Activated naive CD4-positive, alpha-beta T cell treated with anti-CD3 and anti-CD28 coated beads, Interleukin-2, amount 10 ng/mL, durations not matched to agents 7 days and 5 days (primary cell): ENCODE measurements at regions of chr22 and their contacts with region 1.

Region 1: GRCh38 chr22:32528984-32529982 is 54.7 kb downstream of the FBXO7 start:
- DNase-seq: peak; percentile 78
- H3K4me3 Mint-ChIP-seq: no peak overlapping the region
- H3K27ac Mint-ChIP-seq: no peak overlapping the region
- H3K4me1 Mint-ChIP-seq: no peaks in the 10 kb centered on the region
- H3K27me3 Mint-ChIP-seq: peaks cover 11% of the 10 kb centered on the region

Region 2: GRCh38 chr22:32307617-32308016 is 221.7 kb before region 1 on chr22:
- CTCF ChIA-PET with region 1: no interaction called
- DNase-seq: no peak
- H3K4me3 Mint-ChIP-seq: no peak overlapping the region
- H3K27ac Mint-ChIP-seq: no peak overlapping the region
- H3K4me1 Mint-ChIP-seq: no peaks in the 10 kb centered on the region
- H3K27me3 Mint-ChIP-seq: peaks cover 17% of the 10 kb centered on the region

Region 3: GRCh38 chr22:32660292-32660691 is 131.0 kb after region 1 on chr22:
- CTCF ChIA-PET with region 1: interaction called, 14 read pairs
- DNase-seq: peak; percentile 72
- H3K4me3 Mint-ChIP-seq: no peak overlapping the region
- H3K27ac Mint-ChIP-seq: no peak overlapping the region
- H3K4me1 Mint-ChIP-seq: no peaks in the 10 kb centered on the region
- H3K27me3 Mint-ChIP-seq: peaks cover 27% of the 10 kb centered on the region